Panc1 (cell line): ENCODE measurements at regions of chr3 and their contacts with region 1.

Region 1: DNA sequence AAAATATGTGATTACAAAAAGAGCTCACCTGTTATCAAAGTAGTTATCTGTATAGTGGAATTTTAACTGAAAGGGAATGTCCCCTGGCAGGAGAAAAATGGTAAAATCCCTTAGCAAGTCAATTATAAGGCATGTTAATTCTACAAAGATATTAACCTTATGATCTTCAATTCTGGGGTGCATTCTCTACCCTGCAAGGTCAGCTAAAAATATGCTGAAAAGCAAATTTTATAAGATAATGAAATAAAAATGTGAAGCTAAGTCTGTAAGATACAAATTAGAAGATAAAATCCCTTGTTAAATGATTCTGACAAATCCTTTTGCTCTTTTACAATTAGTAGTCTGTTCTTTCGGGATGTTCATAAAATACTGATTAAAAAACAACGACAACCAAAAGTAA is 109.8 kb downstream of the BBX start:
- DNase-seq: no peak
- ATAC-seq: no peak
- H3K4me3 ChIP-seq: no peak overlapping the region
- H3K27ac ChIP-seq: no peak overlapping the region
- H3K4me1 ChIP-seq: no peaks in the 10 kb centered on the region
- H3K27me3 ChIP-seq: no peaks in the 10 kb centered on the region
- CTCF ChIP-seq: no peak

Region 2: GRCh38 chr3:107367353-107367752 is 265.2 kb before region 1 on chr3:
- CTCF ChIA-PET with region 1: no interaction called
- POLR2A ChIA-PET with region 1: interaction called, 16 read pairs
- in situ Hi-C with region 1: no loop called
- intact Hi-C with region 1: no loop called
- DNase-seq: no peak
- ATAC-seq: no peak
- H3K4me3 ChIP-seq: no peak overlapping the region
- H3K27ac ChIP-seq: no peak overlapping the region
- H3K4me1 ChIP-seq: no peaks in the 10 kb centered on the region
- H3K27me3 ChIP-seq: no peaks in the 10 kb centered on the region
- CTCF ChIP-seq: no peak

Region 3: GRCh38 chr3:107476462-107476861 is 156.1 kb before region 1 on chr3:
- CTCF ChIA-PET with region 1: no interaction called
- POLR2A ChIA-PET with region 1: no interaction called
- in situ Hi-C with region 1: no loop called
- intact Hi-C with region 1: no loop called
- DNase-seq: no peak
- ATAC-seq: no peak
- H3K4me3 ChIP-seq: no peak overlapping the region
- H3K27ac ChIP-seq: no peak overlapping the region
- H3K4me1 ChIP-seq: no peaks in the 10 kb centered on the region
- H3K27me3 ChIP-seq: no peaks in the 10 kb centered on the region
- CTCF ChIP-seq: no peak